ENCODE measurements at regions of chr6 and their contacts with region 1.

Region 1: GRCh38 chr6:80214436-80215022 is 108.1 kb downstream of the BCKDHB start:
- DNase-seq: peak; percentile 69
- H3K4me3 Mint-ChIP-seq: no peak overlapping the region
- H3K27ac Mint-ChIP-seq: no peak overlapping the region
- H3K4me1 Mint-ChIP-seq: no peaks in the 10 kb centered on the region
- H3K27me3 Mint-ChIP-seq: no peaks in the 10 kb centered on the region
- CTCF ChIP-seq: peak; percentile 85

Region 2: DNA sequence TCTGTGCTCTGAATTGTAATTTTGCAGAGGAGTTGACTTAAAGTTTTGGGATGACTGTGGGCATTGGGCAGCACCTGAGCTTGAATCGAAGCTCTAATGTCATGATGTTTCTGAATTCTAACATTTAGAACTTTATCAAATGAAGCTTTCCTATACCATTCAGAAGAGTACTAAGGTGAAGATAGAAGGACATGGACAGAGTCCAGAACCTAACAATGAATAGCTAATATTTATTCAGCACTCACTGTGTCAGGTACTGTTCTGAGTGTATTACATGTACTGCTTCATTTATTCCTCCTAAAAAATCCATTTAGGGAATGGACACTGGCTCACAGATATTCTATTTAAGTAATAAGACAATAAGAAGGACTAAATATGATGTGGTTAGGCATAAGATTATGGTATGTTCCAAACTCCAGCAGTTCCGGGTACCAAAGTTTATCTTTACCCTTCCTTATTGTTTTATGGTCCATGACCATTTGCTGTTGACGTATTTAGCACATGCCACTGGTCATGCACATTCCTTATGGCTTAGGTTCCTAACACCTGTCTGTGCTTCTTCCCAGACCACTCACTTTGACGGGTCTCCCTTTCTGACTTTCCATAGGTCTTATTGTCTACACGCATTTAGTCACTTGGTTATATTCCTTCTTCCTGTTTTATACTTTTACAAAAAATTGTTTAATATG is 87.7 kb before region 1 on chr6:
- CTCF ChIA-PET with region 1: no interaction called
- POLR2A ChIA-PET with region 1: no interaction called
- intact Hi-C with region 1: no loop called
- DNase-seq: no peak
- H3K4me3 Mint-ChIP-seq: no peak overlapping the region
- H3K27ac Mint-ChIP-seq: no peak overlapping the region
- H3K4me1 Mint-ChIP-seq: peaks cover 12% of the 10 kb centered on the region
- H3K27me3 Mint-ChIP-seq: no peaks in the 10 kb centered on the region
- CTCF ChIP-seq: no peak

Region 3: DNA sequence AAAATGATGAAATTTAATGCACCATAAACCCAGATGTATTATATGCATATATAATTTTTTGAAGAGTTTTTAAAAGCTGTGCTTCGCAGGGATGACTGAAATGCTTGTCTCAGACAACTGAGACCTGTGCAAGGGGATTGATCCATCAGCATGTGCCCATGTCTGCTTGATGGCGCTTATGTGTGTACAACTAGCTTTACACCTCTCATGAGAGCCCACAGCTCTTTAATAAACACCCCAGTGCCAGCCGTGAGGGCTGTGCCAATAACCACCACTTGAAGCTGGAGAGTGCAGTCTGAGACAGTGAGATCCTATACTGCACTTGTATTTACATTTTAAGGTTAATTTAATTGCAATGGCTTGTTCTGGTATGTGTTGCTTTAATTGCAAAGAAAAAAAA is 117.4 kb after region 1 on chr6:
- CTCF ChIA-PET with region 1: interaction called, 10 read pairs
- POLR2A ChIA-PET with region 1: no interaction called
- intact Hi-C with region 1: loop called (anchors 2 kb)
- DNase-seq: no peak
- H3K4me3 Mint-ChIP-seq: no peak overlapping the region
- H3K27ac Mint-ChIP-seq: no peak overlapping the region
- H3K4me1 Mint-ChIP-seq: no peaks in the 10 kb centered on the region
- H3K27me3 Mint-ChIP-seq: no peaks in the 10 kb centered on the region
- CTCF ChIP-seq: no peak

Region 4: DNA sequence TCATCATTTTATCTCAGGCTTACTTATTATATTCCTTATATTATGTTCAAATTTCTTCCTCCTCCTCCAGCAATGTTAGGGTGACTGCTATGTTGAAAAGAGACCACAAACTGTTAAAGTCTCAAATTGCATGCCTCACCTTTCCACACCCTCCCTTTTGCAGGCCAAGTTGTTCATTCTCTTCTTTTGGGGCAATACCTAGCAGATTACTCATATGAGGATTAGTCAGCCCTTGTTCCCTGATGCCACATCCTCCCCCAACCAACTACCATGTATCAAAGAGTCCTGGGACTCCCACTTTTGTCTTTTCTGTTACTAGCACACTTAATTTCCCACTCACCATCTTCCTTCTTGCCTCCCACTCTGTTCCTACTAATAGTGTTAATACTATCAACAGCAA is 326.7 kb after region 1 on chr6:
- CTCF ChIA-PET with region 1: interaction called, 3 read pairs
- POLR2A ChIA-PET with region 1: interaction called, 3 read pairs
- intact Hi-C with region 1: loop called (anchors 10 kb)
- DNase-seq: peak; percentile 94
- H3K4me3 Mint-ChIP-seq: peak overlapping the region; percentile 32
- H3K27ac Mint-ChIP-seq: peak overlapping the region; percentile 68
- H3K4me1 Mint-ChIP-seq: peaks cover 86% of the 10 kb centered on the region
- H3K27me3 Mint-ChIP-seq: no peaks in the 10 kb centered on the region
- CTCF ChIP-seq: no peak

Region 5: GRCh38 chr6:80742481-80742880 is 528.0 kb after region 1 on chr6:
- CTCF ChIA-PET with region 1: interaction called, 4 read pairs
- POLR2A ChIA-PET with region 1: no interaction called
- intact Hi-C with region 1: loop called (anchors 2 kb)
- DNase-seq: peak; percentile 47
- H3K4me3 Mint-ChIP-seq: no peak overlapping the region
- H3K27ac Mint-ChIP-seq: no peak overlapping the region
- H3K4me1 Mint-ChIP-seq: no peaks in the 10 kb centered on the region
- H3K27me3 Mint-ChIP-seq: no peaks in the 10 kb centered on the region
- CTCF ChIP-seq: peak; percentile 58

Measured in MCF 10A (cell line).